Uterus (tissue), 4 donors: ENCODE measurements at regions of chr13 and their contacts with region 1.

Region 1: DNA sequence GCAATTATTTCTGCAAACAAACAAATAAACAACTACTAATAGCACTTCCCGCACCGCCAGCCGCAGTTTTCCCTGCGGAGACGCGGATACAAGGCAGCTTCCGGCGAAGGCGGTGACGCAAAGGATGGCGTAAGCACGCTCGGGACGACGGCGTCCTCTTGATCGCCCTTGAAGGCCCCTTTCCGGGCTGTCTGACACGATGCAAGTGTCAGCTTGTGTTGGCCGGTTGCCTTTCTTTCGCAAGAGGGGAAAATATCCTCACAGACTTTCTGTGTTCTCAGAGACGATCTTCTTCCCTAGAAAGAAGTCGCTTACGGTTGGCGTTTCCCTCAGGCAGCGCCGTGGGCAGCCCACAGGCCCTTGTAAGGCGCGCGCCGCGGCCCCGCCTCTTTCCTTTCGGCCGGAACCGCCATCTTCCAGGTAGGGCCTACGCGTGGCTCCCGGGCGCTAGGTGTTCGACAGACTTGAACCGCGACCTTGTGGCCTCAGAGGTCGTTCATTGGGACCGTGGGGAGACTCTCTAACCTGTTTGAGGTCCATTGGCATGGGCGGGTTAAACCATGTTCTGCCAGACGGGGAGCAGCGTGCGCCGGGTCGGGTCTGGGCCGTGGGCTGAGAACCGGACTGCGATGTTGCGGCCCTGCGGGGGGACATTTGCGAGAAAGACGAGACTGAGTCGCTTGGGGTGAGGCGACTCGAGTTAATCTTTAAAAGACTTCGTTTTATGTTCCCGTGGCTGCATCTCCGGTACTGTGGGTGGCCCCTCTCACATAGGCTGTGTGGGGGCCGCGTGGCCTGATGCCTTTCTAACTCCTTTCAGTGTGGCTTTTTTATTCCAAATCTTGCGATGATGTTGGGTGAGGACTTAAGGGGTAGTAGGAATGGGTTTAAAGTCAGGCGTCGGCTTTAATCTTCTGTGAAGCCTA is at the start of gene RPL21:
- DNase-seq: peak; percentile 95 to 97
- H3K4me3 ChIP-seq: peak within 1 kb of the TSS; percentile 88 to 100
- H3K27ac ChIP-seq: peak within 1 kb of the TSS; percentile 95 to 98
- H3K4me1 ChIP-seq: peaks cover 6 to 11% of the 10 kb centered on the region in 2 donors
- H3K27me3 ChIP-seq: no peaks in the 10 kb centered on the region
- CTCF ChIP-seq: no peak
- POLR2A ChIP-seq: peak; percentile 41 to 83
- total RNA-seq, gene RPL21: 816 to 2,598 (median 1,942) TPM

Region 2: GRCh38 chr13:26390203-26390602 is 861.2 kb before region 1 on chr13:
- intact Hi-C with region 1: no loop called
- DNase-seq: no peak
- H3K4me3 ChIP-seq: no peak overlapping the region
- H3K27ac ChIP-seq: no peak overlapping the region
- H3K4me1 ChIP-seq: no peaks in the 10 kb centered on the region
- H3K27me3 ChIP-seq: no peaks in the 10 kb centered on the region
- CTCF ChIP-seq: no peak
- POLR2A ChIP-seq: no peak

Region 3: GRCh38 chr13:27171827-27172494 is 79.5 kb before region 1 on chr13:
- intact Hi-C with region 1: loop called (anchors 5 kb)
- DNase-seq: peak; percentile 86 to 91
- H3K4me3 ChIP-seq: peak overlapping the region; percentile 70 to 85
- H3K27ac ChIP-seq: peak overlapping the region; percentile 92 to 98
- H3K4me1 ChIP-seq: no peaks in the 10 kb centered on the region
- H3K27me3 ChIP-seq: no peaks in the 10 kb centered on the region
- CTCF ChIP-seq: peak in 3 of 4 experiments; percentile 18 to 23 (median 20)
- POLR2A ChIP-seq: peak; percentile 27 to 38